Activated CD4-positive, alpha-beta T cell treated with anti-CD3 and anti-CD28 coated beads for 36 hours (primary cell): ENCODE measurements at regions of chr22 and their contacts with region 1.

Region 1: GRCh38 chr22:45082795-45083194 is 73.0 kb upstream of the PHF21B start:
- DNase-seq: peak; percentile 62
- ATAC-seq: no peak
- H3K4me3 Mint-ChIP-seq: no peak overlapping the region
- H3K27ac Mint-ChIP-seq: no peak overlapping the region
- H3K4me1 Mint-ChIP-seq: peaks cover 22% of the 10 kb centered on the region
- H3K27me3 Mint-ChIP-seq: peaks cover 39% of the 10 kb centered on the region

Region 2: DNA sequence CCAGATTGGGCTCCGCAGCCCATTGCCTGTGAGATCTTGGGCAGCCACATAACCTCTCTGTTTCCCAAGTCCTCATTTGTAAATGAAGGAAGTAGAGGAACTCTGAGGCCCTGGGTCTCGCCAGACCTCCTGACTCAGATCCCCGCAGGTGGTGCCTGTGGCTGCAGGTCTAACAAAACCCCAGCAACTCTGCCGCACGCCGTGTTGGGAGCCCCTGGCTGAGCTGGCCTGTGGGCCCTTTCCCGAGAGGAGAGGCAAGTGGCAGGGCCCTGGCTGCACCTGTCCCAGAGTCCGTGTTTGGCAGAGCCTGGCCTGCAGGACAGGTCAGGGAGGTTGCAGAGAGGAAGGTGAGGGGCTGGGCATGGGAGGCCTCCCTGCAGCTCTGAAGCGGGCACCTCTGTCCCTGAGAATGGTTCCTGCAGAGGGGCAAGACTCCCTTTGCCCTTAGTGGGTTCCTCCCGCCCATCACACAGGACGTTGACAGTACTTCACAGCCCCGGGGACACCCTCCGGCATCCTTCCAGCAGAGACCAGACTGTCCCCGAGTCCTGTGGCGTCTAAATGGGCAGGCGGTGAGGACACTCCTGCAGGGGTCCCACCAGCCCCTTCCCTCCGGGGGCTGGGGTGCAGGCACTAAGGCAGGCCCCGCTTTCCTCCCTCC is 262.7 kb before region 1 on chr22:
- CTCF ChIA-PET with region 1: no interaction called
- POLR2A ChIA-PET with region 1: no interaction called
- intact Hi-C with region 1: loop called (anchors 5 kb)
- DNase-seq: no peak
- ATAC-seq: no peak
- H3K4me3 Mint-ChIP-seq: no peak overlapping the region
- H3K27ac Mint-ChIP-seq: no peak overlapping the region
- H3K4me1 Mint-ChIP-seq: no peaks in the 10 kb centered on the region
- H3K27me3 Mint-ChIP-seq: peaks cover 1% of the 10 kb centered on the region

Region 3: GRCh38 chr22:45009881-45010531 is 72.8 kb before region 1 on chr22 and contains the start of gene PHF21B:
- CTCF ChIA-PET with region 1: no interaction called
- POLR2A ChIA-PET with region 1: no interaction called
- intact Hi-C with region 1: loop called in 1 of 2 experiments (anchors 2 kb)
- DNase-seq: peak; percentile 49
- ATAC-seq: peak; percentile 45
- H3K4me3 Mint-ChIP-seq: peak within 1 kb of the TSS; percentile 72
- H3K27ac Mint-ChIP-seq: no peak within 1 kb of the TSS
- H3K4me1 Mint-ChIP-seq: peaks cover 15% of the 10 kb centered on the region
- H3K27me3 Mint-ChIP-seq: peaks cover 51% of the 10 kb centered on the region
- total RNA-seq, gene PHF21B: not detected

Region 4: GRCh38 chr22:45424231-45424731 is 341.5 kb after region 1 on chr22:
- CTCF ChIA-PET with region 1: no interaction called
- POLR2A ChIA-PET with region 1: no interaction called
- intact Hi-C with region 1: no loop called
- DNase-seq: no peak
- ATAC-seq: no peak
- H3K4me3 Mint-ChIP-seq: no peak overlapping the region
- H3K27ac Mint-ChIP-seq: no peak overlapping the region
- H3K4me1 Mint-ChIP-seq: no peaks in the 10 kb centered on the region
- H3K27me3 Mint-ChIP-seq: no peaks in the 10 kb centered on the region